PC-9 (cell line): ENCODE measurements at regions of chr7 and their contacts with region 1.

Region 1: DNA sequence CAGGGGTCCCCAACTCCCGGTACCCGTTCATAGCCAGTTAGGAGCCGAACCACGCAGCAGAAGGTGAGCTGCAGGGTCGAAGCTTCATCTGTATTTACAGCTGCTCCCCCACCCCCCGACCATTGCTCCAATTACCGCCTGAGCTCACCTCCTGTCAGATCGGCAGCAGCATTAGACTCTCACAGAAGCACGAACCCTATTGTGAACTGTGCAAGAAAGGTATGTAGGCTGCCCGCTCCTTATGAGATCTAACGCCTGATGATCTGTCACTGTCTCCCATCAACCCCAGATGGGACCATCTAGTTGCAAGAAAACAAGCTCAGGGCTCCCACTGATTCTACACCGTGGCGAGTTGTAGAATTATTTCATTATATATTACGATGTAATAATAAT is 14.6 kb upstream of the AZGP1 start:
- DNase-seq: no peak
- H3K4me3 ChIP-seq: no peak overlapping the region
- H3K27ac ChIP-seq: no peak overlapping the region
- H3K4me1 ChIP-seq: 0 out of 2 replicates have a peak, but pooled peaks cover 3% of the 10 kb centered on the region
- H3K27me3 ChIP-seq: peaks cover 42% of the 10 kb centered on the region
- CTCF ChIP-seq: no peak

Region 2: DNA sequence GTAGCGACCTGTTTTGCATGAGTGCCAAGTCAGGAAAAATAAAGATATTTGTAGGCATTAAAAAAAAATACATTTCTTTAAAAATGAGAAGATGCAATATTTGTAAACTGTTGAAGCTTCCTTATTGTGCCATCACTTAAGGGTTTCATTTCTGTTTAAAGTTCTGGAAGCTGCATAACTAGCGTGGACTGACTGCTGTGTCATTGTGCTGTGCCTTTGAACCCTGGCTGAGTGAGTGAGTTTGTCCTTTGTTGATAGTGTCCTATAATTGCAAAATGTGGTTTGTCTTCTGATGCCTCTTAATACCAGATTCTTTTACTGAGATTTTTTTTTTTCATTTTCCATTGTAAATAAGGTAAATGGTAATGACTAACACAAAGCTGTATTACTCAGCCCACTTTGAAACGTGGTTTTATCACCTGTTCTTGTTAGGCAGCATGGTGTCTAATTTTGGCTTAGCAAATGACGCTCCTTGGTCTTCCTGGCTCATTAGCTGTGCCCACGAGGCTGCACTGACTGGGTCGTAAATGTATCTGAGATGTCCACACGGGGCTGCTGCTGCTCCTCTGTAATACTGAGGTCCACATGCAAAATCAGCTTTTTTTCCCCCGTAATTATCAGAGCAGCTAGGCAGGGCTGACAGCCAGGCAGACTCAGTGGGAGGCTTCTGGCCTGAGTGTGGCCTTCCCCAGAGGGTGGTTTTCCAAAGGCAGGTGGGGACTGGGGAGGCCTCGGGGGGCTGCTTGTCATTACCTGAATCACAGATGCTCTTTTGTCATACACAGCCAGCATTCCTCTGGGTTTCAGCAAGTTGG is 359.0 kb before region 1 on chr7:
- CTCF ChIA-PET with region 1: interaction called, 3 read pairs
- POLR2A ChIA-PET with region 1: no interaction called
- intact Hi-C with region 1: loop called (anchors 1 kb)
- DNase-seq: peak; percentile 50 to 73
- H3K4me3 ChIP-seq: no peak overlapping the region
- H3K27ac ChIP-seq: no peak overlapping the region
- H3K4me1 ChIP-seq: no peaks in the 10 kb centered on the region
- H3K27me3 ChIP-seq: no peaks in the 10 kb centered on the region
- CTCF ChIP-seq: peak; percentile 76

Region 3: DNA sequence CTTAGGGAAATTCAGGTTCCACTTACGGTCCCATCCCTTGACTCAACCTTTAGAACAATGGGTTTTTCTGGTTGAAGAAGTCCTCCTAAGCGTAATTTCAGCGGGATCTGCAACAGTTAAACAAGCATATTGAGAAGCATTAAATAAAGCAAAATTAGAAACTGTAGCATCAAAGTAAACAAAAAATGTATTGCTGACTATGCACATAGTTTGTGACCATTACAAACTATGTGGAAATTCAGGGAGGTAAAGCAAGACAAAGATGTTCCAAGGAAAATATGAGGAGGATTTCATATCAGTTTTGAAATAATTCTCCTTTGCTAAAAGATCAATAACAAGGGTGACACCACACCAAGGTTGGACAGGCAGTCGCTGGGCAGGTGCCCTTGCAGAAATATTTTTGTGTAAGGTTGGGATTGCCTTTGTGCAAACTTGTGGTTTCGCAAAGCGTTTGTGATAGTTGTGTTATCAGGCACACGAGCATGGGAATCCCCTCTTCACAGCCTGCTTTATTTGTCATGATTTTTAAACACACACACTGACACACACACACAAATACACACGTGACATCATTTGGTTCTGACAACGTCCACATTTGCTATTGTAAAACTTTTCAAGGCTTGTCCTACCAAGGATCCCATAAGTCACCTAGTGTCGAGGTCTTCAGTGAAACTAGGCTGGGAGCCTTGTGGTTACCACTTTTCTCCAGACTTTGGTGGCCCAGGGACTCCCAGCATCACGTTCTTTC is 305.2 kb before region 1 on chr7:
- CTCF ChIA-PET with region 1: no interaction called
- POLR2A ChIA-PET with region 1: no interaction called
- intact Hi-C with region 1: no loop called
- DNase-seq: no peak
- H3K4me3 ChIP-seq: no peak overlapping the region
- H3K27ac ChIP-seq: no peak overlapping the region
- H3K4me1 ChIP-seq: no peaks in the 10 kb centered on the region
- H3K27me3 ChIP-seq: no peaks in the 10 kb centered on the region
- CTCF ChIP-seq: no peak

Region 4: GRCh38 chr7:99822731-99823718 is 167.4 kb before region 1 on chr7:
- CTCF ChIA-PET with region 1: no interaction called
- POLR2A ChIA-PET with region 1: no interaction called
- intact Hi-C with region 1: no loop called
- DNase-seq: no peak
- H3K4me3 ChIP-seq: no peak overlapping the region
- H3K27ac ChIP-seq: no peak overlapping the region
- H3K4me1 ChIP-seq: peaks cover 11% of the 10 kb centered on the region
- H3K27me3 ChIP-seq: peaks cover 18% of the 10 kb centered on the region
- CTCF ChIP-seq: no peak

Region 5: GRCh38 chr7:99910976-99911375 is 79.5 kb before region 1 on chr7:
- CTCF ChIA-PET with region 1: interaction called, 4 read pairs
- POLR2A ChIA-PET with region 1: interaction called, 4 read pairs
- intact Hi-C with region 1: loop called (anchors 1 kb)
- DNase-seq: no peak
- H3K4me3 ChIP-seq: no peak overlapping the region
- H3K27ac ChIP-seq: no peak overlapping the region
- H3K4me1 ChIP-seq: no peaks in the 10 kb centered on the region
- H3K27me3 ChIP-seq: no peaks in the 10 kb centered on the region
- CTCF ChIP-seq: no peak

Region 6: DNA sequence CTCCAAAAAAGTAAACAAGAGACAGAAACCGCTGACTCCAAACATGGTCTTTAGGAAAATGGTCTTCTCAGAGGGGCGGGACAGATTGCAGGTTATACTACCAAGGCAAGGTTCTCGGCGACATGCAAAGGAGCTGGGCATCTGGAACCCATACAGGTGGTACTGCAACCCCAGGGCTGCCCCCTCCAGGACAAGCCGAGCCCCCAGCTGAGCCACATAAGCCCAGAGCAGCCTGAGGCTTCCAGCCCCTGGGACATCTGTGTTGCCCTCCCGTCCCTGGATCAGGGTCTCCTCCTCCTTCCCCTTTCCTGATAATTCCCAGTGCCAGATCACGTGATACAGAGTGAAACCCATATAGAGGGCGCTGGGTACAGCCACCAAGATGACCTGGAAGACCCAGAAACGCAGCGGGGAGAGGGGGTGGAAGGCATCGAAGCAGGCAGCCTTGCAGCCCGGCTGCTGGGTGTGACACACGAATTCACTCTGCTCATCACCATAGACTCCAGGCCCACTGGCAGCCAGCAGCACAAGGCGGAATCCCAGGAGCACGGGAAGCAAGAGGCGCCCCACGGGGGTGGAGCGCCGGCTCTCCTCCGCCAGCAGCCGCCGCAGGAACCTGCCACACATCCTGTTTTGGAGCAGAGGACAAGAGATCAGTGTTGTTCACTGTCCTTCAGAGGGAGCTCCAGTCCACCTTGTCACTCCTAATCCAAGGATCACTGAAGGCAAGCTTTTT is 61.3 kb before region 1 on chr7 and contains the start of gene GJC3:
- CTCF ChIA-PET with region 1: interaction called, 3 read pairs
- POLR2A ChIA-PET with region 1: no interaction called
- intact Hi-C with region 1: loop called (anchors 1 kb)
- DNase-seq: peak; percentile 58 to 68
- H3K4me3 ChIP-seq: peak within 1 kb of the TSS; percentile 48; the same call in 1 of the 2 replicates
- H3K27ac ChIP-seq: no peak within 1 kb of the TSS
- H3K4me1 ChIP-seq: 0 out of 2 replicates have a peak, but pooled peaks cover 3% of the 10 kb centered on the region
- H3K27me3 ChIP-seq: peaks cover 63% of the 10 kb centered on the region
- CTCF ChIP-seq: peak; percentile 58
- total RNA-seq, gene GJC3: not detected in 2 replicates

Region 7: GRCh38 chr7:100003711-100004661 is 13.5 kb after region 1 on chr7:
- CTCF ChIA-PET with region 1: interaction called, 18 read pairs
- POLR2A ChIA-PET with region 1: no interaction called
- intact Hi-C with region 1: no loop called
- DNase-seq: no peak
- H3K4me3 ChIP-seq: no peak overlapping the region
- H3K27ac ChIP-seq: no peak overlapping the region
- H3K4me1 ChIP-seq: 0 out of 2 replicates have a peak, but pooled peaks cover 7% of the 10 kb centered on the region
- H3K27me3 ChIP-seq: peaks cover 9% of the 10 kb centered on the region
- CTCF ChIP-seq: no peak